ENCODE measurements at regions of chr9 and their contacts with region 1.

Region 1: GRCh38 chr9:34458013-34458958 is at the starts of genes DNAI1 and FAM219A:
- DNase-seq: peak; percentile 95 to 99
- H3K4me3 ChIP-seq: peak within 1 kb of the TSS; percentile 79 to 94
- H3K27ac ChIP-seq: peak within 1 kb of the TSS; percentile 76 to 88
- H3K4me1 ChIP-seq: peaks cover 0 to 28% of the 10 kb centered on the region in 2 donors
- H3K27me3 ChIP-seq: no peaks in the 10 kb centered on the region
- CTCF ChIP-seq: no peak
- total RNA-seq, gene DNAI1: not detected
- total RNA-seq, gene FAM219A: 26.8 TPM

Region 2: GRCh38 chr9:34048923-34049697 is 409.2 kb before region 1 on chr9:
- intact Hi-C with region 1: loop called (anchors 5 kb)
- DNase-seq: peak; percentile 94 to 98
- H3K4me3 ChIP-seq: peak overlapping the region; percentile 95 to 98
- H3K27ac ChIP-seq: peak overlapping the region; percentile 85 to 95
- H3K4me1 ChIP-seq: peaks cover 6 to 9% of the 10 kb centered on the region in 2 donors
- H3K27me3 ChIP-seq: no peaks in the 10 kb centered on the region
- CTCF ChIP-seq: no peak

Region 3: DNA sequence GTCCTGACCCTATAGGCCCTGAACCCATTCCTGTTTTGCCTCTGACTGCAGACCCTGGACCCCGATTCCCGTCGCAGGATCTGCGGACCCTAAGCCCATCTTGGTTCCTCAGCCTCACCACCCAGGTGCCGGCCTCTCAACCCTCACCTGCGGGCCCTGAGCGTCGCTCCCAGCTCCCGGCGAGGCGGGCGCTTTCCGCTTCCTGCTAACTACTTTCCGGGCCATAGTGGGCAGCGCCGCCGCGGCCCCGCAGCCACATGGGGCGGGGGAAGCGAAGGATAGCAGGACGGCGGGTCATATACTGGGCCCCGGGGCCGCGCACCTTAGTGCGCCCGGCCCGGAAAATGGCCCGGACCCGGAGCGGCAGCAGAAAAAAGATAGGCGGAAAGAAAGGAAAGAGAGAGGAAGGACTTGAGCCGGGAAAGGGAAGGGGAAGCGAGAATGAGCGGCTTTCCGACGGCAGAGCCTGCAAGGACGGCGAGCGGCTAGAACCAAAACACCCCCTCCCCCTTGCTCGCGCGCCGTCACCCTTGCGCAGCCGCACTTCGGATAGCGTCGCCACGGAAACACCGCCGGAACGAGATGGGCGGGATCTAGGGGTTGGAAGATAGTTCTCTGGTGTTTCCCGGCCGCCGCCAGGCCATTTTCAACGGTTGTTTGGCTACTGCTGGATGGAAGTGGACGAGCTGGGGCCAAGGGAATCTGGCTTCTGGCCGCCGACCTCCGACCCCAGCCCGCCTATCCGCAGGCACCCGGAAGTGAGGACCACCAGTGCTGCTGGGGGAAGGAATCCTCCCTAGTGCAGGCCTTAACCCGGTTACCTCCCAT is 331.9 kb before region 1 on chr9 and contains the start of gene DCAF12:
- intact Hi-C with region 1: loop called (anchors 5 kb)
- DNase-seq: peak; percentile 31 to 93
- H3K4me3 ChIP-seq: peak within 1 kb of the TSS; percentile 61 to 85
- H3K27ac ChIP-seq: peak within 1 kb of the TSS; percentile 90 to 95
- H3K4me1 ChIP-seq: peaks cover 9 to 12% of the 10 kb centered on the region in 2 donors
- H3K27me3 ChIP-seq: no peaks in the 10 kb centered on the region
- CTCF ChIP-seq: peak in 1 of 3 experiments; percentile 22
- total RNA-seq, gene DCAF12: 27.5 TPM

Region 4: GRCh38 chr9:34376596-34377403 is 81.5 kb before region 1 on chr9 and contains the start of gene MYORG:
- intact Hi-C with region 1: loop called (anchors 2 kb)
- DNase-seq: peak; percentile 88 to 97
- H3K4me3 ChIP-seq: peak within 1 kb of the TSS; percentile 85 to 86
- H3K27ac ChIP-seq: peak within 1 kb of the TSS; percentile 74 to 78
- H3K4me1 ChIP-seq: peaks cover 7 to 16% of the 10 kb centered on the region in 2 donors
- H3K27me3 ChIP-seq: no peaks in the 10 kb centered on the region
- CTCF ChIP-seq: no peak
- total RNA-seq, gene MYORG: 11.0 TPM

Region 5: DNA sequence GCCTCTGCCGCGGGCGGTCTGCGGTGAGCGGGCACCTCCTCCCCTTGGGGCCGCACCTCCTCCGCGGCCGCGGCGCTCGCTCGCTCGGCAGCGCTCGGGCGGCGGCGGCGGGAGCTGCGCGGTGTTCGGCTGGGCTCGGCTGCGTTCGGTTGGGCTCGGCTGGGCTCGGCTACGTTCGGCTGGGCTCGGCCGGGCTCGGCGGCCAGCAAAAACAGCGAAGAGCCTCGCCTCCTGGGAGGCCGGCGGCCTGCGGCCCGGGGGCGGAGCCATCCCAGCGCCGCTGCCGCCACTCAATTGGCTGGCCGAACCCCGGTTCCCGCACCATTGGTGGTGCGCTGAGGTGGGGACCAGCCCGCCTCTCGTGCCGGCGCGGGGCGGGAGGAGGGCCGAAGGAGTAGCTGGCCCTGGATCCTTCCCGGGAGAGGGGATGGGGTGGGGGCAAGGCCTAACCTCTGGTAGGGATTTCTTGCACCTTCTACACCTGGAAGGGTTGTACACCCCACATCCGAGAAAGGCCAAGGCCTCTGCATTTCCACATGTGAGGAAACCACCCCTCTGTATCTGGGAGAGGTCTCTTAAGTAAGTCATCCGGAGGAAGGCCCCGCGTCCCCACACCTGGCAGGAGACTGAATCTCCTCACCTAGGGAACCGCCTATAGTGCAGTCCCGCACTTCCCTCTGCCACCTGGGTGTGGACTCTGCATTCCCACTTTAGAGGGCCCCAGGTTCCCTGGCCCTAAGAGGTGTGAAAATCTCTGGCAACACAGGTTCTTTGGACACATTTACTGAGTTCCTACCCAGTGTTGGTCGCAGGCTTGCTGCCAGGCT is 64.9 kb after region 1 on chr9 and contains the start of gene ENHO:
- intact Hi-C with region 1: loop called (anchors 2 kb)
- DNase-seq: peak; percentile 26 to 93
- H3K4me3 ChIP-seq: peak within 1 kb of the TSS; percentile 47 to 68
- H3K27ac ChIP-seq: no peak within 1 kb of the TSS
- H3K4me1 ChIP-seq: peaks cover 3 to 5% of the 10 kb centered on the region in 2 donors
- H3K27me3 ChIP-seq: no peaks in the 10 kb centered on the region
- CTCF ChIP-seq: no peak
- total RNA-seq, gene ENHO: not detected

Region 6: DNA sequence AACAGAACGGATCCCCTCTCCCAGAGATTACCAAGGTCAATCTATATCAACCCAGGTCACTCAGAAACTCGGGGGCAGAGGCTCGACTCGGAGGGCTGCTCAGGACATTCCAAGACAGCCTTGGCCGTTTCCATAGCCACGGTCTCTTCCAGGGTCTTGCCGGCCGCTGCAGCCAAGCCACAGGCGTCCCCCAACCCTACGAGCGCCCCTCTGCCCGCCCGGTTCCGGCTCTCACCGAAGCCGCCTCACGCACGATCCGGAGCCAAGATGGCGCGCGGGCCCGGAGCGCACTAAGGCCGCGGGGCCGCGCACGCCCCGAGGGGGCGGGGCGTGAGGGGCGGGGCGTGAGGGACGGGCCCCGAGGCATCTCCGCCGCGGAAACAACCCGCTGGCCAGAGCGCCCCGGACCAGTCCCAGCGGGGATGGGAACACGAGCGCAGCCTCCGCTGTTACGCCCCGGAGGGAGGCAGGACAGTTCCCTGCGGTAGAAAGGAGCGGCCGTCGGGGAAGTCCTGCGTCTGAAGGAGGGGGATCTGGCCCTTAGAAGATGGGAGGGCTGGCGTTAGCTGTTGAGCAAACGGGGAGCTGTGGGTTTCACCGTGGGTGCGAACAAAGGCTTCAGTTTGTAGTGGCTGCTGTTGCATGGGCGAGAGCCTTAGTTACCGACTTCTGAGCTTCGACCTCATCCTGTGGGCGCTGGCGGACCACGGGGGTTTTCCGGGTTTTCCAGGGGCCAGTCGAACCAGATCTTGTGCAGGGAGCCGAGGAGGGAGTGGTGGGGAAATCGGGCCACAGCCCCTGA is 153.7 kb after region 1 on chr9 and contains the start of gene RPP25L:
- intact Hi-C with region 1: loop called (anchors 5 kb)
- DNase-seq: peak; percentile 63 to 92
- H3K4me3 ChIP-seq: peak within 1 kb of the TSS; percentile 77 to 92
- H3K27ac ChIP-seq: peak within 1 kb of the TSS; percentile 71 to 83
- H3K4me1 ChIP-seq: peaks cover 3 to 13% of the 10 kb centered on the region in 2 donors
- H3K27me3 ChIP-seq: no peaks in the 10 kb centered on the region
- CTCF ChIP-seq: no peak
- total RNA-seq, gene RPP25L: 7.2 TPM

Region 7: DNA sequence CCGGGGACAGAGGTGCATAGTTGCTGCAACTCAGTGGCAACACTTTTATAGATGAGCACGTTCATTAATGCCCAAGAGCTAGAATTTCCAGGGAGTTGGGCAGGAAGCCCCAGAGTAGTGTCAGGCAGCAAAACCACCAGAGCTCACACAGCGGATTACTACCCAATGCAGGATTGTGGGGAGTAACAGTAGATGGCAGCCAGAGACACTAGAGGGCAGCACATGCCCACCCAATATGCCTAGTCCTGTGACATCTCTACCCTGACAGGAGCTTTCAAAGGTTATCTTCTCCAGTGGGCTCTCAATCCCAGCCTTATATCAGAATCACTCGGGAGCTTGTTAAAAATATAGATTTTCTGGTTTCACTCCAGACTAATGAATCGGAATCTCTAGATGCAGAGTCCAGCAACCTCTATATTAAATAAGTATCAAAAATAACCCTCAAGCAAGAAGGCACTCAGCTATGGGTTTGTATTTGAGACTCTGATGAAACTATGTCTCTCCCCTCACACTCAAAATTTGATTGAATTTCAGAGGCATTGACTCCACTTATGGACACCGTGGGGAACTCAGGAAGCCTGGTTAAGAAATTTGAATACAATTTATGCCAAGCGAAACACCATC is 441.4 kb after region 1 on chr9:
- intact Hi-C with region 1: no loop called
- DNase-seq: peak in 1 of 2 donors; percentile 83
- H3K4me3 ChIP-seq: no peak overlapping the region
- H3K27ac ChIP-seq: no peak overlapping the region
- H3K4me1 ChIP-seq: no peaks in the 10 kb centered on the region
- H3K27me3 ChIP-seq: no peaks in the 10 kb centered on the region
- CTCF ChIP-seq: peak; percentile 76 to 84 (median 79)

Region 8: GRCh38 chr9:36400332-36401163 is 1942.3 kb after region 1 on chr9:
- intact Hi-C with region 1: loop called (anchors 5 kb)
- DNase-seq: peak; percentile 38 to 90
- H3K4me3 ChIP-seq: peak overlapping the region; percentile 64 to 79
- H3K27ac ChIP-seq: peak overlapping the region; percentile 87 to 94
- H3K4me1 ChIP-seq: peaks cover 0 to 9% of the 10 kb centered on the region in 2 donors
- H3K27me3 ChIP-seq: no peaks in the 10 kb centered on the region
- CTCF ChIP-seq: peak in 1 of 3 experiments; percentile 17